MCF 10A (cell line): ENCODE measurements at regions of chr6 and their contacts with region 1.

Region 1: GRCh38 chr6:47203266-47203937 is 106.3 kb downstream of the TNFRSF21 start:
- DNase-seq: no peak
- H3K4me3 Mint-ChIP-seq: no peak overlapping the region
- H3K27ac Mint-ChIP-seq: no peak overlapping the region
- H3K4me1 Mint-ChIP-seq: peaks cover 45% of the 10 kb centered on the region
- H3K27me3 Mint-ChIP-seq: no peaks in the 10 kb centered on the region
- CTCF ChIP-seq: no peak

Region 2: GRCh38 chr6:47242483-47243386 is 39.3 kb after region 1 on chr6:
- CTCF ChIA-PET with region 1: no interaction called
- POLR2A ChIA-PET with region 1: interaction called, 11 read pairs
- intact Hi-C with region 1: no loop called
- DNase-seq: peak; percentile 94
- H3K4me3 Mint-ChIP-seq: peak overlapping the region; percentile 65
- H3K27ac Mint-ChIP-seq: peak overlapping the region; percentile 77
- H3K4me1 Mint-ChIP-seq: peaks cover 36% of the 10 kb centered on the region
- H3K27me3 Mint-ChIP-seq: no peaks in the 10 kb centered on the region
- CTCF ChIP-seq: no peak